MCF 10A (cell line): ENCODE measurements at regions of chr5 and their contacts with region 1.

Region 1: DNA sequence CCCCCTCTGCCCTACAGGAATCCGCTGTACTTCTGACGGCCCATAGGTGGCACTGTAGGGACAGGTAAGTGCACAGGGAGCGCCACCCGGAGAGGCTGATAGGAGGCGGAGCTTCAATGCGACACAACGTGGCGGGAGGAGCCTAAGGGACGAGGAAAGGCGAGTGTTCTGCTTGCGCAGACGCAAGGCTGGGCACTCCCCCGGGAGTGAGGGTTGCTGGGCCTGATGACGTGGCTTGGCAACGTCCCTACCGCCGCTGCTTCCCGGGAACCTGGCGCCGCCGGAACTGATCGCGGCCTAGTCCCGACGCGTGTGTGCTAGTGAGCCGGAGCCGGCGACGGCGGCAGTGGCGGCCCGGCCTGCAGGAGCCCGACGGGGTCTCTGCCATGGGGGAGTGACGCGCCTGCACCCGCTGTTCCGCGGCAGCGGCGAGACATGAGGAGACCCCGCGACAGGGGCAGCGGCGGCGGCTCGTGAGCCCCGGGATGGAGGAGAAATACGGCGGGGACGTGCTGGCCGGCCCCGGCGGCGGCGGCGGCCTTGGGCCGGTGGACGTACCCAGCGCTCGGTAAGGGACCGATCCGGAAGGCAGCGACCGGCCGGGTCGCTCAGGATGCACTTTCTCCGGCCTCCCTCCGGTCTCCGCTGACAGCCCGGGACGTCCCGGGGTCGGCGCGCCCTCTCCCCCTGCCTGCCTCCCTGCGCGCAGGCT is at the start of gene SLC30A5:
- DNase-seq: peak; percentile 99
- H3K4me3 Mint-ChIP-seq: peak within 1 kb of the TSS; percentile 86
- H3K27ac Mint-ChIP-seq: peak within 1 kb of the TSS; percentile 92
- H3K4me1 Mint-ChIP-seq: peaks cover 16% of the 10 kb centered on the region
- H3K27me3 Mint-ChIP-seq: no peaks in the 10 kb centered on the region
- CTCF ChIP-seq: peak; percentile 89
- total RNA-seq, gene SLC30A5: 61.8 and 73.8 TPM in 2 replicates

Region 2: GRCh38 chr5:68968429-68968828 is 125.5 kb before region 1 on chr5:
- CTCF ChIA-PET with region 1: no interaction called
- POLR2A ChIA-PET with region 1: no interaction called
- intact Hi-C with region 1: no loop called
- DNase-seq: no peak
- H3K4me3 Mint-ChIP-seq: no peak overlapping the region
- H3K27ac Mint-ChIP-seq: no peak overlapping the region
- H3K4me1 Mint-ChIP-seq: no peaks in the 10 kb centered on the region
- H3K27me3 Mint-ChIP-seq: peaks cover 29% of the 10 kb centered on the region
- CTCF ChIP-seq: no peak

Region 3: DNA sequence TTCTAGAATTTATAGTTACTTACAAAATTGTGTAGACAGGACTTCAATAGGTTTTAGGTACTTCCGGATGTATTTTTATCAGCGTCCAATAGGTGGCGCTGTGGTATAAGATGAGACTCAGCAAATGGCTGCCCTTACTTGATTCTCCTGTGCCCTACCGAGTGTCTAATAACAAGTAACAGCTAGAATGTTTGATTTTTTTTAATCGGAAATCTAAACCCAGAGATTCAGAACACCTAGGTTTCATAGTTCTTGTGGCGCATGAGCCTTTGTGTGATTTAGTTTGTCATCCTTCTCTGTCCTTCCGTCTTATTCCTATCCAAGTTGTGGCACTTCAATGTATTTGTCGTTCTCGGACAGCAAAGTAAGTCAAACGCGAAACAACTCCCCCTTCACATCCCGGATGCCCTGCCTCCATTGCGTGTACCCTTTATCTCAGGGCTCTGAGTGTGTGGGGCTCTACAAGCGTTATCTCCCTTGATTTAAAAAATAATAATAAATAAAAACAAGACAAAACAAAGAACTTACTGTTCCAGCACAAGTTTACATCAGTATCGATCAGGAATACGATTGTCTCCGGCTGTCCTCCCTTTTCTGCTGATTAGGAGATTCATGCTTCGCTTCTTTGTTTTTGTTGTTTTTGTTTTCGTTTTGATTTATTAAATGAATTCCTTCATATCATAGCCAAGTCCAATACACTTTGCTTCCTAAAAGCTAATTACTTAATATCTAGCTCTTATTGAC is 50.8 kb before region 1 on chr5:
- CTCF ChIA-PET with region 1: interaction called, 13 read pairs
- POLR2A ChIA-PET with region 1: interaction called, 3 read pairs
- intact Hi-C with region 1: no loop called
- DNase-seq: peak; percentile 92
- H3K4me3 Mint-ChIP-seq: no peak overlapping the region
- H3K27ac Mint-ChIP-seq: no peak overlapping the region
- H3K4me1 Mint-ChIP-seq: peaks cover 5% of the 10 kb centered on the region
- H3K27me3 Mint-ChIP-seq: no peaks in the 10 kb centered on the region
- CTCF ChIP-seq: peak; percentile 74

Region 4: DNA sequence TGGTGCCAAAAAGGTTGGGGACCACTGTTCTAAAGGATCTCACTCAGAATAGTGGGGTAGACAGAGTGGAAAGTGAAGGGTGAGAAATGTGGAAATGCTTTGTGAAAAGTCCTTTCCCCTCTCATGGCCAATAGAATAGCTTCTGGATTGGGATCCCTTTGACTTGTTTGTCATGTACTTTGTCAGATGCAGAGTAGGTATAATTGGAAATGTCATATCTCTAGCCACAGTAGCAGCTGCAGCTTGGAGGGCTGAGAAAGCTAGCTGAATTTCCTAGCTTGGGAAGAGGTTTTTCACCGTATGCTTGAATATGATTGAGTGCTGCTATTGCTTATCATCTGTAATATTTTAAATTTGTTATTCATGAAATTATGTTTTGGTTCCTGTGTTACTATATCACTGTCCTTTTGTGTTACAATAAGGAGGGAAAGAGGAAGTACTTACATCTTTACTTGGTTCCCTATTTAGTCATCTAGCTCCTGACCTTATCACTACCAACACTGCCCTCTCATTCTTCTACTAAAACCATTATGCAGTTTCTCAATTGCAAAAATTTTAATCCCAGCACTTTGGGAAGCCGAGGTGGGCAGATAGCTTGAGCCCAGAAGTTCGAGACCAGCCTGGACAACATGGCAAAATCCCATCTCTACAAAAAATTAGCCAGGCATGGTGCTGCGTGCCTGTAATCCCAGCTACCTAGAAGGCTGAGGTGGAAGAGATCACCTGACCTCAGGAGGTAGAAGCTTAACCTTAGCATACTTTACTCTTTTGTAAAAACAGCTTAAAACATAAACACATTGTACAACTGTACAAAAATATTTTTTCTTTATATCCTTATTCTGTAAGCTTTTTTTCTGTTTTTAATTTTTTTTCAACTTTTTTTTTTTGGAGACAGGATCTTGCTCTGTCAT is 12.3 kb after region 1 on chr5:
- CTCF ChIA-PET with region 1: interaction called, 13 read pairs
- POLR2A ChIA-PET with region 1: interaction called, 11 read pairs
- intact Hi-C with region 1: no loop called
- DNase-seq: no peak
- H3K4me3 Mint-ChIP-seq: no peak overlapping the region
- H3K27ac Mint-ChIP-seq: no peak overlapping the region
- H3K4me1 Mint-ChIP-seq: no peaks in the 10 kb centered on the region
- H3K27me3 Mint-ChIP-seq: no peaks in the 10 kb centered on the region
- CTCF ChIP-seq: no peak

Region 5: GRCh38 chr5:69129413-69129812 is 35.5 kb after region 1 on chr5:
- CTCF ChIA-PET with region 1: no interaction called
- POLR2A ChIA-PET with region 1: no interaction called
- intact Hi-C with region 1: no loop called
- DNase-seq: peak; percentile 45
- H3K4me3 Mint-ChIP-seq: no peak overlapping the region
- H3K27ac Mint-ChIP-seq: no peak overlapping the region
- H3K4me1 Mint-ChIP-seq: no peaks in the 10 kb centered on the region
- H3K27me3 Mint-ChIP-seq: no peaks in the 10 kb centered on the region
- CTCF ChIP-seq: no peak

Region 6: GRCh38 chr5:69234457-69235268 is 140.7 kb after region 1 on chr5 and contains the start of gene CDK7:
- CTCF ChIA-PET with region 1: interaction called, 6 read pairs
- POLR2A ChIA-PET with region 1: interaction called, 10 read pairs
- intact Hi-C with region 1: no loop called
- DNase-seq: peak; percentile 94
- H3K4me3 Mint-ChIP-seq: peak within 1 kb of the TSS; percentile 93
- H3K27ac Mint-ChIP-seq: peak within 1 kb of the TSS; percentile 93
- H3K4me1 Mint-ChIP-seq: peaks cover 33% of the 10 kb centered on the region
- H3K27me3 Mint-ChIP-seq: no peaks in the 10 kb centered on the region
- CTCF ChIP-seq: no peak
- total RNA-seq, gene CDK7: 43.7 and 48.5 TPM in 2 replicates

Region 7: GRCh38 chr5:69369369-69370121 is 275.6 kb after region 1 on chr5 and contains the starts of genes AK6, RAD17 and TAF9:
- CTCF ChIA-PET with region 1: interaction called, 6 read pairs
- POLR2A ChIA-PET with region 1: interaction called, 10 read pairs
- intact Hi-C with region 1: loop called (anchors 1 kb)
- DNase-seq: peak; percentile 93
- H3K4me3 Mint-ChIP-seq: peak within 1 kb of the TSS; percentile 79
- H3K27ac Mint-ChIP-seq: peak within 1 kb of the TSS; percentile 99
- H3K4me1 Mint-ChIP-seq: peaks cover 28% of the 10 kb centered on the region
- H3K27me3 Mint-ChIP-seq: no peaks in the 10 kb centered on the region
- CTCF ChIP-seq: no peak
- total RNA-seq, gene AK6: 52.4 and 64.3 TPM in 2 replicates
- total RNA-seq, gene RAD17: 21.9 and 25.9 TPM in 2 replicates
- total RNA-seq, gene TAF9: 116 and 149 TPM in 2 replicates